ENCODE measurements at regions of chr3 and their contacts with region 1.

Region 1: GRCh38 chr3:195863121-195864006 is 45.0 kb downstream of the TNK2 start:
- DNase-seq: peak; percentile 66
- H3K4me3 ChIP-seq: no peak overlapping the region
- H3K27ac ChIP-seq: no peak overlapping the region
- H3K4me1 ChIP-seq: no peaks in the 10 kb centered on the region
- H3K27me3 ChIP-seq: no peaks in the 10 kb centered on the region
- CTCF ChIP-seq: peak; percentile 72

Region 2: GRCh38 chr3:195570344-195570743 is 293.0 kb before region 1 on chr3:
- CTCF ChIA-PET with region 1: no interaction called
- POLR2A ChIA-PET with region 1: no interaction called
- intact Hi-C with region 1: no loop called
- DNase-seq: no peak
- H3K4me3 ChIP-seq: no peak overlapping the region
- H3K27ac ChIP-seq: no peak overlapping the region
- H3K4me1 ChIP-seq: peaks cover 9% of the 10 kb centered on the region
- H3K27me3 ChIP-seq: no peaks in the 10 kb centered on the region
- CTCF ChIP-seq: no peak

Region 3: DNA sequence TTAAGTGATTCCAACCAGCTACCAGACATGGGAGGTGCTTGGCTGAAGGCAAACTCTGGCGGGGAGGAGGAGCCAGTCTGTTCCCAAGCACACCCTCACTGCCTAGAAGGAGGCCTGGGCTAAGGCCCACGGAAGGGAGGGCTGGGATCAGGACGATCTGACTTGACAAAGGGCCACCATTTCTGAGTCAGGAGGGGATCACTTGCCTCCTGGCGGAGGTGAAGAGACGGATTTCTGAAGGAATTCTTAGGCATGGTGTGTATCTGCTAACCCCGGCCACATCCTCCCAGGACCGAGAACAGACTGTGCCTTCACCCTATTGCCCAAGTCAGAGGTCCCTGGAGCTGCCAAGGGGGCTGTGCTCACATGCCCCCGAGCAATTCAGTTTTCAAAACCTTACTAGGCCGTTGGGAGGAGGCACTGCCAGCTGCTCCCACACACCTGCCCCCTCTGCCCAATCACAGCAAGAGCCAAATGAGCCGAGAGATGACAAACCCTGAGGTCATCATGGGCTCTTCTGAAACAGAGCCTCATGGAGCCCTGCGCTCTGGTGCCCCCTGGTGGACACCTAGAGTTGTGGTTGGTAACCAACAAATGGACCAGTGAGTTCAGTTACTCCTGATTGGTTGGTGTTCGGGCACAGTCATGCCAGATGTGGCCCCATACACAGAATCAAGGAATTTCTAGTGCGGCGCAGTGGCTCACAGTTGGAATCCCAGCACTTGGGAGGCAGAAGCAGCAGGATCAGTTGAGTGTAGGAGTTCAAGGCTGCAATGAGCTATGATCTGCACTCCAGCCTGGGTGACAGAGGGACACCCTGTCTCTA is 51.5 kb after region 1 on chr3:
- CTCF ChIA-PET with region 1: interaction called, 3 read pairs
- POLR2A ChIA-PET with region 1: no interaction called
- intact Hi-C with region 1: loop called (anchors 1 kb)
- DNase-seq: peak; percentile 96
- H3K4me3 ChIP-seq: no peak overlapping the region
- H3K27ac ChIP-seq: peak overlapping the region; percentile 43
- H3K4me1 ChIP-seq: peaks cover 13% of the 10 kb centered on the region
- H3K27me3 ChIP-seq: no peaks in the 10 kb centered on the region
- CTCF ChIP-seq: peak; percentile 98

Measured in A673 (cell line).